Posterior vena cava (tissue), 2 donors: ENCODE measurements at regions of chr6 and their contacts with region 1.

Region 1: DNA sequence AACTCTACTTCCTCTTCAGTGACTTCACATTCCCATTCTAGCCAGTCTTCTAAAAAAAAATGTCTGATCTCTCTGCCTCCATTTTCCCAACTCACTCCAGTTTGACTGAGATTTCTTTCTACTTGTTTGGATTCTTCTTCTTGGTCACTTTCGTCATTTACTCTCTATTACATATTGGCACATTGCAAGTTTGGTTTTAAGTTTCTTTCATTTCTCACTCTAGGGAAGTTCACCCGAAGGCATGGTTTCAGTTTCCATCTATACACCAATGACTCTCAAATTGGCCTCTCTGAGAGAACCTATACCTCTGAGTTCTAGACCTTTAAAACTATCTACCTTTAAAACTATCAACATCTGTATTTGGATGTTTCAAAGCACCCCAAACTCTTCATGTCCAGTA is 51.3 kb downstream of the CD109 start:
- DNase-seq: no peak

Region 2: DNA sequence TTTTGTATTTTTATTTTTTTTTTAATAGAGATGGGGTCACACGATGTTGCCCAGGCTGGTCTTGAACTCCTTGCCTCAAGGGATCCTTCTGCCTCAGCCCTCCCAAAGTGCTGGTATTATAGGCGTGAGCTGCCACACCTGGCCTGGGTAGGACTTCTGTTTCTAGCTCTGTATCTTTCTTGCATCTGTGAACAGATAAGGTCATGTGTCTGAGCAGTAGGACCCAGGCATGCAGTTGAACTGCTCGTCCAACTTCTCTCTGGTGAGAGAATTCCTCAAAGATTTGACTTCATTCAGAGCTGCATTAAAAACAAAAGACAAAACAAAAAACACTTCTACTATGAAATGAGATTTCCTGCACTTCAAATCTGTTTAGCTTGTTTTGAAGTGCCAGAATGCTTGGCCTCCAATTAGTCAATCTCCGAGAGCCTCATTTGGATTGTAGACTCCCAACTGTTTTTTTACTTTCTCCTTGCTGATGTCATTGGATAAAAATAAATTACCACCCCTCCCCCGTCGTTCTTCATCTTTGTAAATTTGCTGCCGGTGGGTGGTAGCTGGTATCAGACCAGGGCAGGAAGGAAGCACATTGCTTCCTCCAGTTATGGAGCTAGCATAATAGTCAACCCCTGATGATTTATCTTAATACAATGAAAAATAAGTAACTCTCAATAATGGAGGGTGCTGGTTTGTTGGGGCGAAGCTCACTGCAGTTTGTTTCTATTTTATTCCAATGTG is 33.7 kb before region 1 on chr6:
- intact Hi-C with region 1: loop called in 1 of 2 experiments (anchors 2 kb)
- DNase-seq: no peak